ENCODE measurements at regions of chr22 and their contacts with region 1.

Region 1: GRCh38 chr22:39130892-39131850 is 21.3 kb downstream of the CBX7 start:
- DNase-seq: peak; percentile 65
- H3K4me3 ChIP-seq: peak overlapping the region in 1 of 4 donors; percentile 6
- H3K27ac ChIP-seq: peak overlapping the region in 3 of 4 donors; percentile 52 to 68 (median 64)
- H3K4me1 ChIP-seq: peaks cover 0 to 46% (median 36%) of the 10 kb centered on the region in 4 donors
- H3K27me3 ChIP-seq: no peaks in the 10 kb centered on the region
- CTCF ChIP-seq: no peak
- EP300 ChIP-seq: no peak
- POLR2A ChIP-seq: no peak

Region 2: GRCh38 chr22:39013942-39014722 is 117.0 kb before region 1 on chr22 and contains the start of gene APOBEC3C:
- intact Hi-C with region 1: loop called (anchors 5 kb)
- DNase-seq: peak; percentile 94
- H3K4me3 ChIP-seq: peak within 1 kb of the TSS; percentile 37 to 64 (median 58)
- H3K27ac ChIP-seq: peak within 1 kb of the TSS; percentile 80 to 91 (median 88)
- H3K4me1 ChIP-seq: peaks cover 0 to 26% (median 19%) of the 10 kb centered on the region in 4 donors
- H3K27me3 ChIP-seq: no peaks in the 10 kb centered on the region
- CTCF ChIP-seq: no peak
- EP300 ChIP-seq: no peak
- POLR2A ChIP-seq: peak in 1 of 2 donors; percentile 32
- total RNA-seq, gene APOBEC3C: 11.0 to 20.5 (median 15.3) TPM

Region 3: GRCh38 chr22:39080052-39080762 is 51.0 kb before region 1 on chr22:
- intact Hi-C with region 1: no loop called
- DNase-seq: no peak
- H3K4me3 ChIP-seq: no peak overlapping the region
- H3K27ac ChIP-seq: no peak overlapping the region
- H3K4me1 ChIP-seq: peaks cover 0 to 14% (median 7%) of the 10 kb centered on the region in 4 donors
- H3K27me3 ChIP-seq: peaks cover 0 to 3% (median 0%) of the 10 kb centered on the region in 3 donors
- CTCF ChIP-seq: no peak
- EP300 ChIP-seq: no peak
- POLR2A ChIP-seq: no peak

Region 4: GRCh38 chr22:39197396-39197977 is 66.3 kb after region 1 on chr22:
- intact Hi-C with region 1: no loop called
- DNase-seq: peak; percentile 19
- H3K4me3 ChIP-seq: no peak overlapping the region
- H3K27ac ChIP-seq: no peak overlapping the region
- H3K4me1 ChIP-seq: no peaks in the 10 kb centered on the region
- H3K27me3 ChIP-seq: no peaks in the 10 kb centered on the region
- CTCF ChIP-seq: no peak
- EP300 ChIP-seq: no peak
- POLR2A ChIP-seq: no peak

Measured in sigmoid colon (tissue), 7 donors.